Psoas muscle (tissue), 8 donors: ENCODE measurements at regions of chr9 and their contacts with region 1.

Region 1: GRCh38 chr9:6412487-6413364 is at the start of gene UHRF2:
- DNase-seq: peak; percentile 98 to 99
- ATAC-seq: peak; percentile 98
- H3K4me3 ChIP-seq: peak within 1 kb of the TSS; percentile 99
- H3K27ac ChIP-seq: peak within 1 kb of the TSS; percentile 84
- H3K4me1 ChIP-seq: peaks cover 24% of the 10 kb centered on the region
- H3K27me3 ChIP-seq: peaks cover 0 to 11% (median 0%) of the 10 kb centered on the region in 3 donors
- CTCF ChIP-seq: no peak
- total RNA-seq, gene UHRF2: 12.5 to 18.2 (median 15.2) TPM

Region 2: GRCh38 chr9:6015278-6016157 is 397.2 kb before region 1 on chr9 and contains the start of gene RANBP6:
- intact Hi-C with region 1: loop called in 1 of 2 experiments (anchors 10 kb)
- DNase-seq: peak; percentile 92 to 96
- ATAC-seq: peak; percentile 99 to 100 (median 100)
- H3K4me3 ChIP-seq: peak within 1 kb of the TSS; percentile 93
- H3K27ac ChIP-seq: peak within 1 kb of the TSS; percentile 91
- H3K4me1 ChIP-seq: peaks cover 37% of the 10 kb centered on the region
- H3K27me3 ChIP-seq: no peaks in the 10 kb centered on the region
- CTCF ChIP-seq: no peak
- total RNA-seq, gene RANBP6: 16.3 to 24.2 (median 20.0) TPM

Region 3: DNA sequence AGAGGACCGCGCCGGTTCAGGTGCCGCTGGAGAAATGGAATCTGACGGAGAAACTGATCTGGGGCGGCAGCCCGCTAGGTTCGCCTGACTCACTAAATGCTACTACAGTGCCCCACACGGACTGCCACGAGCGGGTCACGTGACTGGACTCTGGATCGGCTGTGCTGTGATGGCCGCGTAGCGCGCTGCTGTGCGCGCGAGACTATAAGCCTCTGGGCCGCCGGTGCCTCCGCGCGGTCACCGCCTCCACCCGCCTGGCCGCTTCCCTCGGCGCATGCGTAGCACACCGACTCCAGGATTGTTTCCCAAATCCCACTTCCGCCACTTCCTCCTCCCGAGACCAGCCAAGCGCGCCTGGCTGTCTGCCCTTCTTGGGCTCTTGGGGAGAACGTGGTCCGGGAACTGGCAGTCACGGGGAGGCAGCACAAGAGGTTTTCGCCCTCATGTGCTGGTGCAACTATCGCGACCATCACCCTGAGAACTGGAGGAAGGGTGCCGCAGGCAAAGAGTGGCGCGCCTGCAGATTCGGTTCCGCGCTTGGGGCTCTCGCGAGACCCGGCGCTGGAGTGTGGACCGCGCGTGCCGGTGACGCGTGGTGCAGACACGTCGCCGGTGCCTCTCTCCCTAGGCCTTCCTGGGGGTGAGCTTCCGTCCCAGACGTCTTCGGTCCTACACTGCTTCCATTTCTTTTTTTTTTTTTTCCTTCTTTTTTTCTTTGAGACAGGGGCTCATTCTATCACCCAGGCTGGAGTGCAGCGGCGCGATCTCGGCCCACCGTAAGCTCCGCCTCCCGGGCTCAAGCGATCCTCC is 268.6 kb after region 1 on chr9:
- intact Hi-C with region 1: loop called in 1 of 2 experiments (anchors 5 kb)
- DNase-seq: peak; percentile 98
- ATAC-seq: peak; percentile 97 to 98 (median 98)
- H3K4me3 ChIP-seq: peak overlapping the region; percentile 75
- H3K27ac ChIP-seq: peak overlapping the region; percentile 92
- H3K4me1 ChIP-seq: peaks cover 10% of the 10 kb centered on the region
- H3K27me3 ChIP-seq: no peaks in the 10 kb centered on the region
- CTCF ChIP-seq: no peak